ENCODE measurements at regions of chr11 and their contacts with region 1.

Region 1: GRCh38 chr11:103055221-103055890 is 36.6 kb downstream of the DCUN1D5 start:
- DNase-seq: peak; percentile 71
- ATAC-seq: peak; percentile 25; the same call in 1 of the 2 replicates
- H3K4me3 ChIP-seq: no peak overlapping the region
- H3K27ac ChIP-seq: no peak overlapping the region
- H3K4me1 ChIP-seq: peaks cover 19% of the 10 kb centered on the region
- H3K27me3 ChIP-seq: no peaks in the 10 kb centered on the region
- CTCF ChIP-seq: peak; percentile 91

Region 2: DNA sequence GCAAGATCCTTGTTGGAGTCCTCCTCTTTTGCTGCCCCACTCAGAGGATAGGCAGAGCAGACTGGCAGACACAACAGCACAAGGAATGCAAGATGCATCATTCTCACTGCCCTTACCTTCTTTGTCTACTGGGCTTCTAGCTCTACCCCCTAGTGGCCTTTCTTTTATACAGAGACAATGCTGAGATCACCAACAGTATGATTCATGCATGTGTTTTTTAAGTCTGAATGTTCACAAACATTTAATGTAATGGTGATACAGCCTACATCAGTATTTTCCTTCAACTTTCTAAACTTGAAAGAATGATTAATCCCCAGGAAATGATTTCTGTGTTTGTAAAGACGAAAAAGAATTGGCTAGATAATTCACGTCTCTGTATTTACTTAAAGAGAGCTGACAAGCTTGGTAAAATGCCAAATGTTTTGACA is 274.9 kb before region 1 on chr11 and contains the start of gene MMP10:
- CTCF ChIA-PET with region 1: no interaction called
- POLR2A ChIA-PET with region 1: interaction called, 3 read pairs
- intact Hi-C with region 1: loop called (anchors 1 kb)
- DNase-seq: peak; percentile 92
- ATAC-seq: peak; percentile 54
- H3K4me3 ChIP-seq: no peak within 1 kb of the TSS
- H3K27ac ChIP-seq: peak within 1 kb of the TSS; percentile 18
- H3K4me1 ChIP-seq: peaks cover 23% of the 10 kb centered on the region
- H3K27me3 ChIP-seq: no peaks in the 10 kb centered on the region
- CTCF ChIP-seq: peak; percentile 87
- total RNA-seq, gene MMP10: 0.07 and 0.69 TPM in 2 replicates

Region 3: GRCh38 chr11:102914238-102915043 is 140.9 kb before region 1 on chr11:
- CTCF ChIA-PET with region 1: interaction called, 6 read pairs
- POLR2A ChIA-PET with region 1: no interaction called
- intact Hi-C with region 1: loop called (anchors 1 kb)
- DNase-seq: peak; percentile 76
- ATAC-seq: peak; percentile 86
- H3K4me3 ChIP-seq: no peak overlapping the region
- H3K27ac ChIP-seq: no peak overlapping the region
- H3K4me1 ChIP-seq: peaks cover 15% of the 10 kb centered on the region
- H3K27me3 ChIP-seq: no peaks in the 10 kb centered on the region
- CTCF ChIP-seq: peak; percentile 93

Region 4: GRCh38 chr11:102950622-102951107 is 104.7 kb before region 1 on chr11:
- CTCF ChIA-PET with region 1: no interaction called
- POLR2A ChIA-PET with region 1: no interaction called
- intact Hi-C with region 1: loop called (anchors 2 kb)
- DNase-seq: peak; percentile 92
- ATAC-seq: peak; percentile 86
- H3K4me3 ChIP-seq: no peak overlapping the region
- H3K27ac ChIP-seq: 0 out of 2 replicates have a peak overlapping the region, but pooled peaks have one; percentile 0
- H3K4me1 ChIP-seq: peaks cover 33% of the 10 kb centered on the region
- H3K27me3 ChIP-seq: no peaks in the 10 kb centered on the region
- CTCF ChIP-seq: no peak

Measured in PC-3 (cell line).